HCT116 (cell line): ENCODE measurements at regions of chr3 and their contacts with region 1.

Region 1: DNA sequence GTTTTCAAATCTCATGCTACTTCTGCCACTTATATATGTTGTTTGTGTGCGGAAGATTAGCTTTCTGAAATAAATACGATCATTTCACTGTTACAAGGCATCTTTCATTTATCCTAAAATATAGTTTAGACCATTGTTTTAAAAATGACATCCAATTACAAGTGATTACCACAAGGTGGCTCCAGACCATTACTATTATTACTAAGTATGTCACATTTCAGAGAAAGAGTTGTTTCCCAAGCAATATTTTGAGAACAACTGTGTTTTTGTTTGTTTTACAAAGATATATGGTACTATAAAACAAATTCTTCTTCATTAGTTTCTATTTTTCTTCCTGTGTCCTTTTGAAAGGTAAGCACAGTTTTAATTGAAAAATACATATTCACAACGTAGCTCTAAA is 136.0 kb upstream of the RAP2B start:
- DNase-seq: peak; percentile 31
- ATAC-seq: no peak
- H3K4me3 ChIP-seq: no peak overlapping the region
- H3K27ac ChIP-seq: no peak overlapping the region
- H3K4me1 ChIP-seq: peaks cover 0 to 4% of the 10 kb centered on the region in 2 experiments; a peak in 1 of 4 replicates
- H3K27me3 ChIP-seq: no peaks in the 10 kb centered on the region
- CTCF ChIP-seq: peak; percentile 42 to 86 (median 81)
- POLR2A ChIP-seq: no peak
- RAD21 ChIP-seq: peak; percentile 87

Region 2: DNA sequence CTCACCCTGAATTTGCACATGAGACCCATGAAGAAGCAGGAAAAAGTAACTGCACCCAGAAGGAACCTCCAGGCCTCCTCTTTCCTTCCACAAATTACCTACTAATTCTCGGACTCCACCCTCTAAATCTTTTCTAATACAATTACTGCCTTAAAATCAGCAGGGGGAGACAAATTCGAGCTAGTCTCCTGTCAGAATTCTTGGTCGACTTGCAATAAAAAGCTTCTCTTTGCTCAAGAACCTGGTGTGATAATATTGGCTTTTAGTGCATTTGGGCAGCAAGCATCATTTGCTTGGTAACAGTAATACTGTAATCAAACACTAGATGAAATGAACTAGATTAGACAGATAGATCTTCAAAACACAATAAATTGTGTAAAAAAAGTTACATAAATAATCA is 417.9 kb after region 1 on chr3:
- CTCF ChIA-PET with region 1: interaction called, 5 read pairs
- POLR2A ChIA-PET with region 1: no interaction called
- RAD21 ChIA-PET with region 1: no interaction called
- intact Hi-C with region 1: loop called (anchors 5 kb)
- DNase-seq: peak; percentile 10
- ATAC-seq: no peak
- H3K4me3 ChIP-seq: no peak overlapping the region
- H3K27ac ChIP-seq: no peak overlapping the region
- H3K4me1 ChIP-seq: no peaks in the 10 kb centered on the region
- H3K27me3 ChIP-seq: no peaks in the 10 kb centered on the region
- CTCF ChIP-seq: peak; percentile 18 to 48 (median 27); a peak in 4 of 6 replicates
- POLR2A ChIP-seq: no peak
- RAD21 ChIP-seq: peak; percentile 54; the same call in 1 of the 2 replicates

Region 3: GRCh38 chr3:153768561-153769469 is 742.8 kb after region 1 on chr3:
- CTCF ChIA-PET with region 1: no interaction called
- POLR2A ChIA-PET with region 1: no interaction called
- RAD21 ChIA-PET with region 1: no interaction called
- intact Hi-C with region 1: loop called (anchors 1 kb)
- DNase-seq: peak; percentile 47
- ATAC-seq: peak; percentile 97
- H3K4me3 ChIP-seq: no peak overlapping the region
- H3K27ac ChIP-seq: no peak overlapping the region
- H3K4me1 ChIP-seq: no peaks in the 10 kb centered on the region
- H3K27me3 ChIP-seq: no peaks in the 10 kb centered on the region
- CTCF ChIP-seq: peak; percentile 46 to 84 (median 79); a peak in 5 of 6 replicates
- POLR2A ChIP-seq: no peak
- RAD21 ChIP-seq: peak; percentile 84

Region 4: DNA sequence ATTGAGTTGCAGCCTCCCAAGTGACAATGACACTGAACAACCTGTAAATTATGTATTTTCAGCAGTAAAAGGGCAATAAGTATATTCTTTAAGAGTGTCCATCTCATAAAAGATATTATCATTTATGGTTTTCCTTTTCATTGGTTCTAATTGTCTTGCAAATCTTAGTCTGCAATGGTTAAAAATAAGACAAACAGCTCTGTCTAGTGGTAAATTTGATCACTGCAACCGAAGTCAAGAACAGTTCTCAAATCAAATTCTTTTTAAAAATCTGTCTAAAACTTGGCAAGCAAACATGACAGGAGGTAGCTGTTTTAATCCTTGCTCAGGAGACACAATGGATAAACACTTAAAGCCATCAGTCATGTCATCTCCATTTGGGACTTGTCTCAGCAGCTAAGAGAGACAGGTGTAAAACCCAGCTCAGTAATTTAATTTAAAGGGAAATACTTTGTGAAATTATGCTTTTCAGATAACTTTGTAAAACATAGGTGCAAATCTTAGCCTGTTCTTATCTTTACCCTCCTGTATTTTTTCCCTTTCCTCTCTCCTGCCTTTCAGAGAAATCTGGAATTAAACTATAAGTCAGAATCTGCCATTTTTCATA is 944.8 kb after region 1 on chr3:
- CTCF ChIA-PET with region 1: interaction called, 3 read pairs
- POLR2A ChIA-PET with region 1: no interaction called
- RAD21 ChIA-PET with region 1: no interaction called
- intact Hi-C with region 1: loop called (anchors 2 kb)
- DNase-seq: peak; percentile 37
- ATAC-seq: peak; percentile 40; the same call in 1 of the 2 replicates
- H3K4me3 ChIP-seq: no peak overlapping the region
- H3K27ac ChIP-seq: no peak overlapping the region
- H3K4me1 ChIP-seq: no peaks in the 10 kb centered on the region
- H3K27me3 ChIP-seq: no peaks in the 10 kb centered on the region
- CTCF ChIP-seq: peak; percentile 31 to 61 (median 52); a peak in 5 of 6 replicates
- POLR2A ChIP-seq: no peak
- RAD21 ChIP-seq: peak; percentile 62